ENCODE measurements at regions of chr5 and their contacts with region 1.

Region 1: GRCh38 chr5:143142596-143143435 is 260.7 kb downstream of the NR3C1 start:
- DNase-seq: peak; percentile 82
- H3K4me3 ChIP-seq: no peak overlapping the region
- H3K27ac ChIP-seq: peak overlapping the region; percentile 45 to 59
- H3K4me1 ChIP-seq: peaks cover 3% of the 10 kb centered on the region
- H3K27me3 ChIP-seq: no peaks in the 10 kb centered on the region
- CTCF ChIP-seq: no peak
- POLR2A ChIP-seq: no peak

Region 2: GRCh38 chr5:143023411-143024096 is 119.3 kb before region 1 on chr5:
- intact Hi-C with region 1: loop called (anchors 10 kb)
- DNase-seq: peak; percentile 27
- H3K4me3 ChIP-seq: no peak overlapping the region
- H3K27ac ChIP-seq: no peak overlapping the region
- H3K4me1 ChIP-seq: no peaks in the 10 kb centered on the region
- H3K27me3 ChIP-seq: no peaks in the 10 kb centered on the region
- CTCF ChIP-seq: no peak
- POLR2A ChIP-seq: no peak

Region 3: GRCh38 chr5:143057580-143057999 is 85.2 kb before region 1 on chr5:
- intact Hi-C with region 1: loop called (anchors 5 kb)
- DNase-seq: no peak
- H3K4me3 ChIP-seq: no peak overlapping the region
- H3K27ac ChIP-seq: no peak overlapping the region
- H3K4me1 ChIP-seq: no peaks in the 10 kb centered on the region
- H3K27me3 ChIP-seq: no peaks in the 10 kb centered on the region
- CTCF ChIP-seq: no peak
- POLR2A ChIP-seq: no peak

Region 4: DNA sequence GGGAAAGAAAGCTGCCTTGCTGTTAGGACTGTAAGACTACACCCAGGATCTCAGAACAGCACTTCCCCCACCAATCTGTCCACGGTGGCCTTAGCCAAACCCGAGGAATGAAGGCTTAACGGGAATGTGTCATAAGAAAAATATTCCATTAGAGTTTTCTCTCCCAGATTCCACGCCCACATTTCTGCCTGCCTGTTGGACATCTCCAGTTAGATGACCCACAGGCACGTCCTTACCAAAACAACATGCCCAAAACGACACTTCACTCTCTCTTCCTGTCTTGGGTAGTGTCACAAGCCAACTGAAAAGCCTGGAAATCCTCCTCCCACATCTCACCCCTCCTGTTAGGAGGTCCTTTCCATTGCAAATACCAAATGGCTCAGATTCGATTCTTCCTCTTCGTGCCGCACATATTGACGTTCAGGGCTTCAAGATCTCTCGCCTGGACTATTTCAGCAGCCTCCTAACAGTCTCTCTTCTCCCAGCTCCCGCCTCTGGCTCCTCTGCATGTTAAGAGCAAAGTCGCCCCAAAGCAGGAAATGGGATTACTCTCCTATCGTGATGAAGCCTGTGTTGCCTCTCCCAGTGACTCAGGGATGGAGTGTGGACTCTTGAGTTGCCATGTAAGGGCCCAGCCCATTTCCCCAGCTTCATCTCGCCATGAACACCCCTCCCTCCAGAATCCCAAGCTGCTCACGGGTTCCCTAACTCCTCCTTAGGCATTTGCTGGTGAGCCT is 101.4 kb after region 1 on chr5:
- intact Hi-C with region 1: loop called (anchors 10 kb)
- DNase-seq: peak; percentile 8
- H3K4me3 ChIP-seq: no peak overlapping the region
- H3K27ac ChIP-seq: no peak overlapping the region
- H3K4me1 ChIP-seq: peaks cover 3% of the 10 kb centered on the region
- H3K27me3 ChIP-seq: no peaks in the 10 kb centered on the region
- CTCF ChIP-seq: no peak
- POLR2A ChIP-seq: no peak